ENCODE measurements at regions of chr6 and their contacts with region 1.

Region 1: GRCh38 chr6:141562851-141563763 is 569.6 kb upstream of the GJE1 start:
- DNase-seq: peak; percentile 64
- H3K4me3 Mint-ChIP-seq: peak overlapping the region; percentile 63
- H3K27ac Mint-ChIP-seq: peak overlapping the region; percentile 48
- H3K4me1 Mint-ChIP-seq: peaks cover 14% of the 10 kb centered on the region
- H3K27me3 Mint-ChIP-seq: peaks cover 1% of the 10 kb centered on the region

Region 2: GRCh38 chr6:139881728-139882211 is 1681.3 kb before region 1 on chr6:
- CTCF ChIA-PET with region 1: interaction called, 3 read pairs
- POLR2A ChIA-PET with region 1: no interaction called
- intact Hi-C with region 1: loop called (anchors 10 kb)
- DNase-seq: peak; percentile 19
- H3K4me3 Mint-ChIP-seq: no peak overlapping the region
- H3K27ac Mint-ChIP-seq: no peak overlapping the region
- H3K4me1 Mint-ChIP-seq: no peaks in the 10 kb centered on the region
- H3K27me3 Mint-ChIP-seq: peaks cover 6% of the 10 kb centered on the region

Region 3: GRCh38 chr6:140921366-140922226 is 641.5 kb before region 1 on chr6:
- CTCF ChIA-PET with region 1: no interaction called
- POLR2A ChIA-PET with region 1: no interaction called
- intact Hi-C with region 1: loop called (anchors 1 kb)
- DNase-seq: no peak
- H3K4me3 Mint-ChIP-seq: no peak overlapping the region
- H3K27ac Mint-ChIP-seq: no peak overlapping the region
- H3K4me1 Mint-ChIP-seq: peaks cover 7% of the 10 kb centered on the region
- H3K27me3 Mint-ChIP-seq: peaks cover 5% of the 10 kb centered on the region

Region 4: GRCh38 chr6:141309295-141309694 is 253.8 kb before region 1 on chr6:
- CTCF ChIA-PET with region 1: interaction called, 5 read pairs
- POLR2A ChIA-PET with region 1: no interaction called
- intact Hi-C with region 1: loop called (anchors 1 kb)
- DNase-seq: no peak
- H3K4me3 Mint-ChIP-seq: no peak overlapping the region
- H3K27ac Mint-ChIP-seq: no peak overlapping the region
- H3K4me1 Mint-ChIP-seq: peaks cover 7% of the 10 kb centered on the region
- H3K27me3 Mint-ChIP-seq: peaks cover 2% of the 10 kb centered on the region

Region 5: DNA sequence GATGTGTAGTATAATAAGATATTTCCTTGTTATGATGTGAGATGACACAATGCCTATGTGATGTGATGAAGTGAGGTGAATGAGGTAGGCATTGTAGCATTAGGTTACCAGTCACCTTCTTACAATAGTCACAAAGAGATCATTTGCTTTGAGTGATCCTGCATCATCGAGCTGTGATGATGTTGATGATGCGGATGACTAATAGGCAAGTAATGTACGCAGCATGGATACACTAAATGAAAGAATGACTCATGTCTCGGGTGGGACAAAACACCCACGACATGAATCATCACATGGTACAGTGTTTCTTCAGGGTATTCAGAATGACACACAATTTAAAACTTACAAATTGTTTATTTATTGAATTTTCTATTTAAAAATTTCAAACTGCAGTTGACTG is 236.7 kb before region 1 on chr6:
- CTCF ChIA-PET with region 1: no interaction called
- POLR2A ChIA-PET with region 1: no interaction called
- intact Hi-C with region 1: loop called (anchors 5 kb)
- DNase-seq: peak; percentile 75
- H3K4me3 Mint-ChIP-seq: no peak overlapping the region
- H3K27ac Mint-ChIP-seq: no peak overlapping the region
- H3K4me1 Mint-ChIP-seq: peaks cover 17% of the 10 kb centered on the region
- H3K27me3 Mint-ChIP-seq: no peaks in the 10 kb centered on the region

Region 6: DNA sequence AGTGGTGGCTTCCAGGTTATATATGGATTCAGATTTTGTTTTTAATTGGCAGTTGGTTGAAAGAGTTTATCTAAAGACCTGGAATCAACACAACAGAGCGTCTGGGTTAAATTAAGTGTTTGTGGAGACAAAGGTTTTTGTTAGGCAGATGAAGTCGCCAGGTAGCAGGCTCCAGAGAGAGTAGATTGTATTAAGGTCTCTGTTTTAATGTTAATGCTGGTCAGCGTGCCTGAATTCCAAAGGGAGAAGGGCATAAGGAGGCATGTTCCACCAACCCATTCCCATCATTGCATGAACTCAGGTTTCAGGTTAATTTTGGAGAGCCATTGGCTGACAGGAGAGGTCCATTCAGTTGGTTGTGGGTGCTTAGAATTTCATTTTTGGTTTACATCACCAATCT is 174.4 kb before region 1 on chr6:
- CTCF ChIA-PET with region 1: no interaction called
- POLR2A ChIA-PET with region 1: no interaction called
- intact Hi-C with region 1: loop called (anchors 10 kb)
- DNase-seq: no peak
- H3K4me3 Mint-ChIP-seq: no peak overlapping the region
- H3K27ac Mint-ChIP-seq: no peak overlapping the region
- H3K4me1 Mint-ChIP-seq: no peaks in the 10 kb centered on the region
- H3K27me3 Mint-ChIP-seq: no peaks in the 10 kb centered on the region

Region 7: DNA sequence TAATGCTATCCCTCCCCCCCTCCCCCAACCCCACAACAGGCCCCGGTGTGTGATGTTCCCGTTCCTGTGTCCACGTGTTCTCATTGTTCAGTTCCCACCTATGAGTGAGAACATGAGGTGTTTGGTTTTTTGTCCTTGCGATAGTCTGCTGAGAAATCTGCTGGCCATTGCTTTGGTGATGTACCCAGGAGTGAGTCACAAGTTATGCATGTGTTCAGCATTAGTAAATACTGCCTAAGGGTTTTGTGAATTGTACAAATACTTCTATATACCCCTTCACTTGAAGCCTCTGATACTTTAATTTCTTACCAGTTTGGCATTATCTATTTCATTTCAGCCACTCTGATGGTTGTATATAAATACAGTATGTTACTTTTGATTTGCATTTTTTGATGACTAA is 141.7 kb before region 1 on chr6:
- CTCF ChIA-PET with region 1: no interaction called
- POLR2A ChIA-PET with region 1: no interaction called
- intact Hi-C with region 1: no loop called
- DNase-seq: no peak
- H3K4me3 Mint-ChIP-seq: no peak overlapping the region
- H3K27ac Mint-ChIP-seq: no peak overlapping the region
- H3K4me1 Mint-ChIP-seq: no peaks in the 10 kb centered on the region
- H3K27me3 Mint-ChIP-seq: no peaks in the 10 kb centered on the region

Measured in activated CD4-positive, alpha-beta memory T cell treated with anti-CD3 and anti-CD28 coated beads for 36 hours (primary cell).